T-cell (primary cell): ENCODE measurements at regions of chr6 and their contacts with region 1.

Region 1: GRCh38 chr6:28895134-28895812 is 28.5 kb downstream of the TRIM27 start:
- DNase-seq: peak; percentile 79 to 96 (median 89)
- ATAC-seq: peak; percentile 75 to 77 (median 77)
- H3K4me3 ChIP-seq: peak overlapping the region; percentile 67 to 93
- H3K4me3 Mint-ChIP-seq: peak overlapping the region; percentile 97 to 99 (median 98)
- H3K27ac ChIP-seq: peak overlapping the region; percentile 97
- H3K27ac Mint-ChIP-seq: peak overlapping the region; percentile 99 to 100
- H3K4me1 ChIP-seq: peaks cover 10 to 13% of the 10 kb centered on the region in 2 experiments
- H3K4me1 Mint-ChIP-seq: peaks cover 15 to 29% (median 21%) of the 10 kb centered on the region in 3 donors
- H3K27me3 ChIP-seq: no peaks in the 10 kb centered on the region
- H3K27me3 Mint-ChIP-seq: peaks cover 0 to 4% of the 10 kb centered on the region in 2 donors

Region 2: GRCh38 chr6:28863604-28864320 is 31.5 kb before region 1 on chr6:
- CTCF ChIA-PET with region 1: interaction called, 3 to 11 read pairs
- POLR2A ChIA-PET with region 1: interaction called in 1 of 2 experiments, 13 read pairs
- DNase-seq: peak; percentile 58 to 92 (median 77)
- ATAC-seq: peak; percentile 26 to 52 (median 34)
- H3K4me3 ChIP-seq: peak overlapping the region; percentile 75 to 92
- H3K4me3 Mint-ChIP-seq: peak overlapping the region; percentile 87 to 98 (median 90)
- H3K27ac ChIP-seq: peak overlapping the region; percentile 57
- H3K27ac Mint-ChIP-seq: peak overlapping the region; percentile 94 to 95
- H3K4me1 ChIP-seq: peaks cover 10 to 31% of the 10 kb centered on the region in 2 experiments
- H3K4me1 Mint-ChIP-seq: peaks cover 45 to 50% (median 50%) of the 10 kb centered on the region in 3 donors
- H3K27me3 ChIP-seq: no peaks in the 10 kb centered on the region
- H3K27me3 Mint-ChIP-seq: peaks cover 0 to 5% of the 10 kb centered on the region in 2 donors

Region 3: GRCh38 chr6:28884423-28885131 is 10.7 kb before region 1 on chr6:
- CTCF ChIA-PET with region 1: interaction called in 1 of 2 experiments, 7 read pairs
- POLR2A ChIA-PET with region 1: interaction called in 1 of 2 experiments, 18 read pairs
- DNase-seq: peak; percentile 61 to 92 (median 82)
- ATAC-seq: peak; percentile 86 to 88 (median 87)
- H3K4me3 ChIP-seq: peak overlapping the region; percentile 32 to 41
- H3K4me3 Mint-ChIP-seq: peak overlapping the region; percentile 54 to 80 (median 68)
- H3K27ac ChIP-seq: peak overlapping the region; percentile 66
- H3K27ac Mint-ChIP-seq: peak overlapping the region; percentile 87 to 88
- H3K4me1 ChIP-seq: peaks cover 8 to 33% of the 10 kb centered on the region in 2 experiments
- H3K4me1 Mint-ChIP-seq: peaks cover 30 to 44% (median 43%) of the 10 kb centered on the region in 3 donors
- H3K27me3 ChIP-seq: peaks cover 0 to 5% of the 10 kb centered on the region in 2 experiments
- H3K27me3 Mint-ChIP-seq: peaks cover 0 to 6% of the 10 kb centered on the region in 2 donors

Region 4: DNA sequence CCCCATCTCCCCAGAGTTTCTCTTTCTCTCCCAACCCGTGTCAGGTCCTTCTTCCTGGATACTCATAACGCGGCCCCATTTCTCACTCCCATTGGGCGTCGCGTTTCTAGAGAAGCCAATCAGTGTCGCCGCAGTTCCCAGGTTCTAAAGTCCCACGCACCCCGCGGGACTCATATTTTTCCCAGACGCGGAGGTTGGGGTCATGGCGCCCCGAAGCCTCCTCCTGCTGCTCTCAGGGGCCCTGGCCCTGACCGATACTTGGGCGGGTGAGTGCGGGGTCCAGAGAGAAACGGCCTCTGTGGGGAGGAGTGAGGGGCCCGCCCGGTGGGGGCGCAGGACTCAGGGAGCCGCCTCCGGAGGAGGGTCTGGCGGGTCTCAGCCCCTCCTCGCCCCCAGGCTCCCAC is 828.0 kb after region 1 on chr6 and contains the start of gene HLA-F:
- CTCF ChIA-PET with region 1: no interaction called
- POLR2A ChIA-PET with region 1: interaction called in 1 of 2 experiments, 11 read pairs
- DNase-seq: peak in 33 of 35 experiments; percentile 66 to 96 (median 81)
- ATAC-seq: peak; percentile 88 to 89 (median 88)
- H3K4me3 ChIP-seq: peak within 1 kb of the TSS; percentile 72 to 96
- H3K4me3 Mint-ChIP-seq: peak within 1 kb of the TSS; percentile 91 to 96 (median 94)
- H3K27ac ChIP-seq: peak within 1 kb of the TSS; percentile 97
- H3K27ac Mint-ChIP-seq: peak within 1 kb of the TSS; percentile 98 to 99
- H3K4me1 ChIP-seq: peaks cover 38 to 54% of the 10 kb centered on the region in 2 experiments
- H3K4me1 Mint-ChIP-seq: peaks cover 49 to 56% (median 54%) of the 10 kb centered on the region in 3 donors
- H3K27me3 ChIP-seq: no peaks in the 10 kb centered on the region
- H3K27me3 Mint-ChIP-seq: no peaks in the 10 kb centered on the region
- total RNA-seq, gene HLA-F: 600 to 951 (median 748) TPM